ENCODE measurements at regions of chr11 and their contacts with region 1.

Region 1: GRCh38 chr11:111601979-111602864 is at the start of gene SIK2:
- DNase-seq: peak; percentile 93
- ATAC-seq: peak; percentile 91
- H3K4me3 Mint-ChIP-seq: peak within 1 kb of the TSS; percentile 96
- H3K27ac Mint-ChIP-seq: peak within 1 kb of the TSS; percentile 91
- H3K4me1 Mint-ChIP-seq: peaks cover 31% of the 10 kb centered on the region
- H3K27me3 Mint-ChIP-seq: no peaks in the 10 kb centered on the region
- total RNA-seq, gene SIK2: 7.9 to 9.7 TPM

Region 2: DNA sequence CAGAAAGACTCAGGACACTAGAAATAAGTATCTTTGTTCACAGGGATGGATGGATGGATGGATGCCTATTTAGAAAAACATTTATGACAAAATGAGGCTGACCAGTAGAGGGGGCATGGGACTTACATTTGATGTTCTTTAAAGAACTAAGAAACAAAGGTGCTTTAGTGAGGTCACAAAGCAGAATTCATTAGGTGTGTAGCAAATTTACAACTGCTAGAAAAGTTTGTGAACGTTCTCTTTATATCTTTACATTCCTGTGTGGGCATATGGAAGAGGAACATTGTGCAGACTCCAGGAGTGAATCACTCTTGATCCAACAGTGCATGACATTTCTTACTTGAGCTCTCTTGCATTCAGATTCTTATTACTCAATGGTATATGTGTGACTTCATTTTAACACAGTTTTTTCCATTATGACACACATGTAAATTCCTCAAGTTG is 15.8 kb before region 1 on chr11:
- CTCF ChIA-PET with region 1: interaction called, 10 read pairs
- DNase-seq: peak; percentile 54
- ATAC-seq: peak; percentile 72
- H3K4me3 Mint-ChIP-seq: no peak overlapping the region
- H3K27ac Mint-ChIP-seq: no peak overlapping the region
- H3K4me1 Mint-ChIP-seq: peaks cover 8% of the 10 kb centered on the region
- H3K27me3 Mint-ChIP-seq: no peaks in the 10 kb centered on the region

Region 3: GRCh38 chr11:111631666-111632039 is 29.4 kb after region 1 on chr11:
- CTCF ChIA-PET with region 1: interaction called, 11 read pairs
- DNase-seq: peak; percentile 48
- ATAC-seq: peak; percentile 88
- H3K4me3 Mint-ChIP-seq: no peak overlapping the region
- H3K27ac Mint-ChIP-seq: no peak overlapping the region
- H3K4me1 Mint-ChIP-seq: peaks cover 26% of the 10 kb centered on the region
- H3K27me3 Mint-ChIP-seq: no peaks in the 10 kb centered on the region

Region 4: DNA sequence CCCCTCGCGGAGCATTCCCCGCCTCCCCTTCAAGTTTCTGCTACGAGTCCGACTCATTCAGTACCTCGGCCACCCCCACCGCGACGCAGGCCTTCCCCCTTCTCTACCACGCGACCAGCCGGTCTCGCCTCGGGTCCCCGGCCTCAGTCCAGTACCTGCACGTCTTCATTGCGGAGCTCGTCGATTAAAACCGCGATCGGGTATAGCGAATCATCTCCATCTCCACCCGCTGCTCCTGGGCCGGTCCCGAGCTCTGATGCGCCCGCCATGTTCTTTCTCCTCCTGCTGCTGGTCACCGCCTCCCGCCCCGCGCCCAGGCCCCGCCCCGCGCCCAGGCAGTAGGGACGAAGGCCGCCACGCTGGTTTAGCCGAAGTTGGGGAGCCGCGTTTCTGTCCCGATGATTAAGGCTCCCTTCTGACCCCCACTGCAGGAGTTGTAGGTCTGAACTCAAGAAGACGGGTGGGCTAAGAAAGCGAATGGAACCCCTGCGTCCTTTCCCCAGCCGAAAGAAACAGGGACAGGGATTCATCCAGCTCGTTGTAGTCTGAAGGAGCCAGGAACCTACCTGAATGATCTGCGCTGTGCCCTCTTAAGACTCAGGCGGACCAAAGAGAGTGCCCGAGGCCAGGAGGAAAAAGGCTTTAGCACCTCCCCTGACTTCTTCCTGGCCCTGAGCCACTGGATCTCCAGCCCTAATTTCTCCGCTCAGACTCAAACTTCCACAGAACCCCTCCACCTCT is 164.0 kb after region 1 on chr11 and contains the start of gene PPP2R1B:
- CTCF ChIA-PET with region 1: interaction called, 19 read pairs
- DNase-seq: peak; percentile 81
- ATAC-seq: peak; percentile 97
- H3K4me3 Mint-ChIP-seq: peak within 1 kb of the TSS; percentile 91
- H3K27ac Mint-ChIP-seq: peak within 1 kb of the TSS; percentile 99
- H3K4me1 Mint-ChIP-seq: peaks cover 35% of the 10 kb centered on the region
- H3K27me3 Mint-ChIP-seq: no peaks in the 10 kb centered on the region
- total RNA-seq, gene PPP2R1B: 55.2 to 64.9 TPM

Region 5: GRCh38 chr11:111777094-111778046 is 175.1 kb after region 1 on chr11:
- CTCF ChIA-PET with region 1: interaction called, 26 read pairs
- DNase-seq: peak; percentile 45
- ATAC-seq: peak; percentile 91
- H3K4me3 Mint-ChIP-seq: no peak overlapping the region
- H3K27ac Mint-ChIP-seq: no peak overlapping the region
- H3K4me1 Mint-ChIP-seq: no peaks in the 10 kb centered on the region
- H3K27me3 Mint-ChIP-seq: no peaks in the 10 kb centered on the region